ENCODE measurements at regions of chr4 and their contacts with region 1.

Region 1: GRCh38 chr4:104531390-104531789 is 36.7 kb upstream of the CXXC4 start:
- DNase-seq: no peak
- H3K4me3 ChIP-seq: no peak overlapping the region
- H3K27ac ChIP-seq: no peak overlapping the region
- H3K4me1 ChIP-seq: no peaks in the 10 kb centered on the region
- H3K27me3 ChIP-seq: no peaks in the 10 kb centered on the region
- CTCF ChIP-seq: no peak
- EP300 ChIP-seq: no peak
- POLR2A ChIP-seq: no peak

Region 2: GRCh38 chr4:104429150-104429741 is 102.1 kb before region 1 on chr4:
- intact Hi-C with region 1: no loop called
- DNase-seq: no peak
- H3K4me3 ChIP-seq: no peak overlapping the region
- H3K27ac ChIP-seq: no peak overlapping the region
- H3K4me1 ChIP-seq: no peaks in the 10 kb centered on the region
- H3K27me3 ChIP-seq: no peaks in the 10 kb centered on the region
- CTCF ChIP-seq: no peak
- EP300 ChIP-seq: no peak
- POLR2A ChIP-seq: no peak

Region 3: GRCh38 chr4:106463622-106464021 is 1932.2 kb after region 1 on chr4:
- intact Hi-C with region 1: loop called in 1 of 4 experiments (anchors 5 kb)
- DNase-seq: no peak
- H3K4me3 ChIP-seq: no peak overlapping the region
- H3K27ac ChIP-seq: no peak overlapping the region
- H3K4me1 ChIP-seq: no peaks in the 10 kb centered on the region
- H3K27me3 ChIP-seq: no peaks in the 10 kb centered on the region
- CTCF ChIP-seq: no peak
- EP300 ChIP-seq: no peak
- POLR2A ChIP-seq: no peak